ENCODE measurements at regions of chr5 and their contacts with region 1.

Region 1: GRCh38 chr5:101045689-101046088 is 142.6 kb upstream of the ST8SIA4 start:
- DNase-seq: peak in 2 of 9 experiments; percentile 34 to 45
- ATAC-seq: no peak
- H3K4me3 ChIP-seq: no peak overlapping the region
- H3K4me3 Mint-ChIP-seq: no peak overlapping the region
- H3K27ac ChIP-seq: no peak overlapping the region
- H3K27ac Mint-ChIP-seq: no peak overlapping the region
- H3K4me1 ChIP-seq: peaks cover 7% of the 10 kb centered on the region
- H3K4me1 Mint-ChIP-seq: peaks cover 4% of the 10 kb centered on the region
- H3K27me3 ChIP-seq: no peaks in the 10 kb centered on the region
- H3K27me3 Mint-ChIP-seq: no peaks in the 10 kb centered on the region
- CTCF ChIP-seq: peak; percentile 39

Region 2: DNA sequence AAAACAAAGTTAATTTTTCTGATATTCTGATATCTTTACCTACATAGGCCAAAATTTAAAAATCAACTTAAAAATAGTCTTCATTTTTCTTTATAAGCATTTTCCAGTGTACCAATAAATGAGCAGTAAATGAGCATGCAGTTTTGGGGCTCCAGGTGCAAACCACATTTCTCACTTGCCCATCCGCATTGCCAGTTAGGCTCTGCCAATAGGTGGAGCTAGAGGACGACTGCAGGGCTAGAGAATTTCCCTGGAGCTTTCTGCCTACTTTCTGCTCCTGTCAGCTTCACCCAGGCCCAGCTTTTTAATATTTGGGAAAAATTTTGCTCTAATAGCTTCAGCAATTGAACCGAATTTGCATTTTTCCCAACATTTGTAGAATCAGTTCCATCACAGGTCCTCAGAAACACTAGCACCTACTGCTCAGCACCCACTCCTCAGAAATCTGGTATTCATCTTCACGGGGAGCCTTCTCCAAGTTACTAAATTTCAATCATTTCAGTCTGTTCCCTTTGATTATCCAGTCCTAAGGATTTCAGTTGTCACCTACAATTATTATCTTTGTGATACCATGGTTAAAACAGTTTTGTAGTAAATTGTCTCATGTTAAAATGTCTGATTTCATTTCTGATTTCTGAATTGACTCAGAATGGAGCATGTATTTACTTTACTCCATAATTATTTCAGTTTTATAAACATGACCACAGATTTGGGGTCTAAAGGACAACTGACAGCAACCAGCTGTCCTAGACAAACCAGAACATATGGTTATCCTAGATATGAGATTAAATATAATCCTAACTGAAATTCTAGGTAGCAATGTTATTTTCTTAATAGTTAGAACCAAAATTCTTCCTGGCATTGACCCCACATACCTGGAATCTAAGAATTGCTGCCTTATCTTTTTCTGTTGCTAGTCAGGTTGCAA is 615.2 kb before region 1 on chr5:
- CTCF ChIA-PET with region 1: no interaction called
- POLR2A ChIA-PET with region 1: no interaction called
- intact Hi-C with region 1: loop called in 1 of 2 experiments (anchors 2 kb)
- DNase-seq: peak; percentile 2 to 58 (median 36)
- ATAC-seq: peak; percentile 46
- H3K4me3 ChIP-seq: no peak overlapping the region
- H3K4me3 Mint-ChIP-seq: no peak overlapping the region
- H3K27ac ChIP-seq: no peak overlapping the region
- H3K27ac Mint-ChIP-seq: no peak overlapping the region
- H3K4me1 ChIP-seq: no peaks in the 10 kb centered on the region
- H3K4me1 Mint-ChIP-seq: no peaks in the 10 kb centered on the region
- H3K27me3 ChIP-seq: no peaks in the 10 kb centered on the region
- H3K27me3 Mint-ChIP-seq: no peaks in the 10 kb centered on the region
- CTCF ChIP-seq: peak; percentile 84

Region 3: GRCh38 chr5:100479079-100479688 is 566.5 kb before region 1 on chr5:
- CTCF ChIA-PET with region 1: no interaction called
- POLR2A ChIA-PET with region 1: no interaction called
- intact Hi-C with region 1: loop called in 1 of 2 experiments (anchors 5 kb)
- DNase-seq: peak in 2 of 9 experiments; percentile 32 to 47
- ATAC-seq: no peak
- H3K4me3 ChIP-seq: no peak overlapping the region
- H3K4me3 Mint-ChIP-seq: no peak overlapping the region
- H3K27ac ChIP-seq: no peak overlapping the region
- H3K27ac Mint-ChIP-seq: no peak overlapping the region
- H3K4me1 ChIP-seq: no peaks in the 10 kb centered on the region
- H3K4me1 Mint-ChIP-seq: no peaks in the 10 kb centered on the region
- H3K27me3 ChIP-seq: no peaks in the 10 kb centered on the region
- H3K27me3 Mint-ChIP-seq: no peaks in the 10 kb centered on the region
- CTCF ChIP-seq: peak; percentile 32

Region 4: GRCh38 chr5:100772548-100772947 is 273.1 kb before region 1 on chr5:
- CTCF ChIA-PET with region 1: interaction called, 4 read pairs
- POLR2A ChIA-PET with region 1: no interaction called
- intact Hi-C with region 1: loop called (anchors 5 to 10 kb)
- DNase-seq: no peak
- ATAC-seq: no peak
- H3K4me3 ChIP-seq: no peak overlapping the region
- H3K4me3 Mint-ChIP-seq: no peak overlapping the region
- H3K27ac ChIP-seq: no peak overlapping the region
- H3K27ac Mint-ChIP-seq: no peak overlapping the region
- H3K4me1 ChIP-seq: peaks cover 2% of the 10 kb centered on the region
- H3K4me1 Mint-ChIP-seq: peaks cover 2% of the 10 kb centered on the region
- H3K27me3 ChIP-seq: no peaks in the 10 kb centered on the region
- H3K27me3 Mint-ChIP-seq: no peaks in the 10 kb centered on the region
- CTCF ChIP-seq: no peak

Region 5: DNA sequence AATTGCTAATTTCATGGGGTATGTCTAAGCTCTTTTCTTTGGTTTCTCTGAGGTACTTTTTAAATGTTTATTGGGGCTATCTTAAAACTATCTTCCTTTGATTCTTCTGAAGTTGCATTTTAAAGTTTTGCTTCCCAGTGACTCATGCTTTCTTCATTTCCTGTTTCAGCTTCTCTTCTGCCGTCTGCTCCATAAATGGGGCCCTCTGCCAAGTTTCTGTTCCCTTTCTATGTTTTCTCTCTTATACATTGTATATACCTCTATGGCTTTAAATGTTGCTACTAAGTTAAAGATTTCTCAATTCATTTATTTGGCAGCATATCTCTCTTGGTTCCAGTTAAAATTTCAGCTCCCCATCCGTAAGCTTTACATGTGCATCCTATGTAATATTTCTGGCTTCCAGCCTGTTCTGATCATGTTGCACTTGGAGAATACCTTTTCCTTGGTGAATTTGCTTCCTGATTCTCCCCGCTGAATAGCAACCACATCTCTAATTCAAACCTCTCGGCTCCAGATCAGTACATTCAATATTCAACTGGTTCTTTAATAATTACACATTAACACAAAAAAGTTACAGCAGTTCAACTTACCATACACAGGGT is 267.9 kb before region 1 on chr5:
- CTCF ChIA-PET with region 1: interaction called, 4 read pairs
- POLR2A ChIA-PET with region 1: no interaction called
- intact Hi-C with region 1: loop called (anchors 5 to 10 kb)
- DNase-seq: peak in 2 of 9 experiments; percentile 17 to 47
- ATAC-seq: peak; percentile 31
- H3K4me3 ChIP-seq: no peak overlapping the region
- H3K4me3 Mint-ChIP-seq: no peak overlapping the region
- H3K27ac ChIP-seq: no peak overlapping the region
- H3K27ac Mint-ChIP-seq: no peak overlapping the region
- H3K4me1 ChIP-seq: peaks cover 18% of the 10 kb centered on the region
- H3K4me1 Mint-ChIP-seq: peaks cover 27% of the 10 kb centered on the region
- H3K27me3 ChIP-seq: no peaks in the 10 kb centered on the region
- H3K27me3 Mint-ChIP-seq: no peaks in the 10 kb centered on the region
- CTCF ChIP-seq: no peak

Region 6: DNA sequence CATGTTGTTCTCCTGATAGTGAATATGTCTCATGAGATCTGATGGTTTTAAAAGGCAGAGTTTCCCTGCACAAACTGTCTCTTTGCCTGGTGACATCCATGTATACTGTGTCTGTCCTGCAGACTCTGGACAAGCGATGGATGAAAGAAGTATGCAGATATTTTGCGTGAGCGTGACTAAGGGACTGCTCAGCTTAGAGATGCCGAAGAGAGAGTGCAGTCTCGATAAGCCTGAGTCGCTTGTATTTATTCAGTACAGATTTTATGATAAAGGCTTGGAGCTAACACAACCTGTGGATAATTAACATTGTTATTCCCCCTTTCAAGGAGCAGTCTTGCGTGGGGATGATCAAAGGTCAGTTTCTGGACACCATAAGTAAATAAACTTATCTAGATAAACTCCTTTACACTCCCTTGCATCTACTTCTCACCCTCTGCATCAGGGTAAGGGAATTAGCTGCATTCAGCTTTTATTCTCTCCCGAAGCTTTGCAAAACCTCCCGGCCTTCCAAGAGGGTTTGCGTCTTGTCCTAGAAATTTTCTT is 215.1 kb after region 1 on chr5:
- CTCF ChIA-PET with region 1: no interaction called
- POLR2A ChIA-PET with region 1: no interaction called
- intact Hi-C with region 1: no loop called
- DNase-seq: no peak
- ATAC-seq: no peak
- H3K4me3 ChIP-seq: no peak overlapping the region
- H3K4me3 Mint-ChIP-seq: no peak overlapping the region
- H3K27ac ChIP-seq: no peak overlapping the region
- H3K27ac Mint-ChIP-seq: no peak overlapping the region
- H3K4me1 ChIP-seq: no peaks in the 10 kb centered on the region
- H3K4me1 Mint-ChIP-seq: no peaks in the 10 kb centered on the region
- H3K27me3 ChIP-seq: no peaks in the 10 kb centered on the region
- H3K27me3 Mint-ChIP-seq: peaks cover 2% of the 10 kb centered on the region
- CTCF ChIP-seq: no peak